AG04450 (cell line): ENCODE measurements at regions of chr1 and their contacts with region 1.

Region 1: GRCh38 chr1:77134359-77134758 is 84.9 kb downstream of the PIGK start:
- DNase-seq: no peak
- H3K4me3 ChIP-seq: no peak overlapping the region
- H3K27ac ChIP-seq: no peak overlapping the region
- H3K27me3 ChIP-seq: no peaks in the 10 kb centered on the region
- CTCF ChIP-seq: no peak

Region 2: DNA sequence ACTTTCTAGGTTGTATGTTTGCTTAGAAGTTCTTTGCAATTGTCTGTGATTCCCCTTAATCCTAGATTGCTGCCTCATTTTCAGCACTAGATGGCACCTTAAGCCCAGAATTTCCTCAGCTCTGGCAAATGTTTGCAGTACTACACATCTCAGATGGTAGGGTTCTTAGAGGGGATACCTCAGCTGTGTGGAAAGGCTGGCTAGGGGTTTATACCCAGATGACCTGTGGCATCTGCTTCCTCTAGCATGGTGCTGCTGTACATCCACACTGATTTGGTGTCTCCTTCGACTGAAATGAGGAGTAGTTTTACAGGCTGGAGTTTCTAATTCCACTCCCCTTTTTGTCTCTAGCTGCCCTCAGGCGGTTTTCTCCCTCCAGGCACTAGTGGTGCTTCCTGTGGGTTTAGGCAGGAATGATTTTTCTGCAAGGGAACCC is 1225.6 kb before region 1 on chr1:
- CTCF ChIA-PET with region 1: interaction called, 10 read pairs
- POLR2A ChIA-PET with region 1: no interaction called
- DNase-seq: peak; percentile 11
- H3K4me3 ChIP-seq: no peak overlapping the region
- H3K27ac ChIP-seq: no peak overlapping the region
- H3K27me3 ChIP-seq: no peaks in the 10 kb centered on the region
- CTCF ChIP-seq: peak; percentile 70

Region 3: GRCh38 chr1:77245830-77246229 is 111.5 kb after region 1 on chr1:
- CTCF ChIA-PET with region 1: no interaction called
- POLR2A ChIA-PET with region 1: no interaction called
- DNase-seq: peak; percentile 59
- H3K4me3 ChIP-seq: no peak overlapping the region
- H3K27ac ChIP-seq: no peak overlapping the region
- H3K27me3 ChIP-seq: no peaks in the 10 kb centered on the region
- CTCF ChIP-seq: no peak

Region 4: GRCh38 chr1:77888081-77888780 is 753.9 kb after region 1 on chr1 and contains the start of gene NEXN:
- CTCF ChIA-PET with region 1: no interaction called
- POLR2A ChIA-PET with region 1: interaction called, 16 read pairs
- DNase-seq: peak; percentile 67
- H3K4me3 ChIP-seq: peak within 1 kb of the TSS; percentile 94
- H3K27ac ChIP-seq: peak within 1 kb of the TSS; percentile 100
- H3K27me3 ChIP-seq: no peaks in the 10 kb centered on the region
- CTCF ChIP-seq: peak; percentile 36
- polyA plus RNA-seq, gene NEXN: 28.6 and 39.9 TPM in 2 replicates